ENCODE measurements at regions of chr2 and their contacts with region 1.

Region 1: DNA sequence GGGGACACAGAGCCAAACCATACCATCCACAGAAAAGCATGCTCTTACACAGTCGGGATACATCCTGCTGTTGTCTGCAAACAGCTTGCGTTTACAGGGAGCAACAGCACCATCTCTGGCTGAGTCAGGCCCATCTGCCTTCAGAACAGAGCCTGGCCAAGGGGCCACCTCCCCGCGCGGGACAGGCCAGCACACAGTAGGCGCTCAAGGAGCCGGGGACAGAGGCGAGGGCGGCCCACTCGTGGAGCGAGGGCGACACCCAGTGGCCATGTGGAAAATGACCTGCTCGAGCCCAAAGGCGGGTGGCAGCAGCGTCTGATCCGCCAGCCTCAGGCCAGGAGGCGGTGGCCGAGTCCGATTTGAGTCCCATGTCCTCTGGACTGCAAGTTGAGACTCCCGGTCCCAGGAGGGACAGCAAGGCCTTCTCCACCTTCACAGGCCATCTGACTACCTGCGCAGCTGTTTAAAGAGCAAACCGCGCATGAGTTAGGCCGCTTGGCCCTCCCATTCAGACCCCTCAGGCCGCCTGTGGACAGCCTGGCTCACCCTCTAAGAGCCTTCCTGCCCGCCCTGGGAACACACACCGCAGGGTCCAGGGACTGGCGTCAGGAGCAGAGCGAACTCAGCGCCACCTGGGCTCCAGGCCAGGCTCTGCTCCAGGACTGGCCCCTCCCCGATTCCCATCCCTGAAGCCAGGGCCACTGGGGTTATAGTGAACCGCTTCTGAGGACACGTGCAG is 38.3 kb downstream of the TTC32 start:
- DNase-seq: peak; percentile 74
- ATAC-seq: peak; percentile 88
- H3K4me3 Mint-ChIP-seq: no peak overlapping the region
- H3K27ac Mint-ChIP-seq: no peak overlapping the region
- H3K4me1 Mint-ChIP-seq: peaks cover 15% of the 10 kb centered on the region
- H3K27me3 Mint-ChIP-seq: no peaks in the 10 kb centered on the region
- CTCF ChIP-seq: peak; percentile 99

Region 2: GRCh38 chr2:18749912-18750526 is 1113.5 kb before region 1 on chr2:
- CTCF ChIA-PET with region 1: interaction called, 10 read pairs
- POLR2A ChIA-PET with region 1: no interaction called
- intact Hi-C with region 1: loop called (anchors 10 kb)
- DNase-seq: peak; percentile 67
- ATAC-seq: no peak
- H3K4me3 Mint-ChIP-seq: no peak overlapping the region
- H3K27ac Mint-ChIP-seq: no peak overlapping the region
- H3K4me1 Mint-ChIP-seq: no peaks in the 10 kb centered on the region
- H3K27me3 Mint-ChIP-seq: no peaks in the 10 kb centered on the region
- CTCF ChIP-seq: peak; percentile 82

Region 3: GRCh38 chr2:19769513-19769912 is 94.0 kb before region 1 on chr2:
- CTCF ChIA-PET with region 1: no interaction called
- POLR2A ChIA-PET with region 1: no interaction called
- intact Hi-C with region 1: loop called (anchors 10 kb)
- DNase-seq: no peak
- ATAC-seq: no peak
- H3K4me3 Mint-ChIP-seq: no peak overlapping the region
- H3K27ac Mint-ChIP-seq: no peak overlapping the region
- H3K4me1 Mint-ChIP-seq: no peaks in the 10 kb centered on the region
- H3K27me3 Mint-ChIP-seq: peaks cover 8% of the 10 kb centered on the region
- CTCF ChIP-seq: no peak

Measured in activated CD8-positive, alpha-beta T cell treated with anti-CD3 and anti-CD28 coated beads for 36 hours (primary cell).